Caco-2 (cell line): ENCODE measurements at regions of chr2 and their contacts with region 1.

Region 1: DNA sequence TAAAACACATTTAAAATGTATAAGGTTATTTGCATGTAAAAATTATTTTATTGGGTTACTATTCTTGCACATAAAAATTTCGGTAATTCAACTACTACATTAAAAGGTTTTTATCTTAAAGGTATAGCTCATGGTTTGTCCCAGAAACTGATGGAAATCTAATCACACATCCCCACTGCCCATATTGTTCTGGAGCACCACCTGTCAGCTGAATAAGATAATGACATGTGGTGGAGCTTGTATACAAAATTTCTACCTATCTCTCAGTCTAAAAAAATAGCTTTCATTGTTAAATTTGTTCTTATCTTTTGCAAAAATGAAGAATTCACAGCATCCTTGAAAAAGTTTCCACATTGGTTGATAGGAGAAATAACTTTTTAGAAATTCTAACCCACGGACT is 18.3 kb downstream of the ERBB4 start:
- DNase-seq: peak in 1 of 2 experiments; percentile 15
- H3K4me3 ChIP-seq: no peak overlapping the region
- H3K4me3 Mint-ChIP-seq: no peak overlapping the region
- H3K27ac Mint-ChIP-seq: no peak overlapping the region
- H3K4me1 ChIP-seq: no peaks in the 10 kb centered on the region
- H3K4me1 Mint-ChIP-seq: no peaks in the 10 kb centered on the region
- H3K27me3 ChIP-seq: no peaks in the 10 kb centered on the region
- H3K27me3 Mint-ChIP-seq: peaks cover 2% of the 10 kb centered on the region
- CTCF ChIP-seq: no peak

Region 2: GRCh38 chr2:211944572-211944971 is 575.8 kb before region 1 on chr2:
- CTCF ChIA-PET with region 1: no interaction called
- POLR2A ChIA-PET with region 1: no interaction called
- intact Hi-C with region 1: no loop called
- DNase-seq: no peak
- H3K4me3 ChIP-seq: no peak overlapping the region
- H3K4me3 Mint-ChIP-seq: no peak overlapping the region
- H3K27ac Mint-ChIP-seq: no peak overlapping the region
- H3K4me1 ChIP-seq: no peaks in the 10 kb centered on the region
- H3K4me1 Mint-ChIP-seq: no peaks in the 10 kb centered on the region
- H3K27me3 ChIP-seq: no peaks in the 10 kb centered on the region
- H3K27me3 Mint-ChIP-seq: no peaks in the 10 kb centered on the region
- CTCF ChIP-seq: no peak

Region 3: GRCh38 chr2:212402315-212402714 is 118.0 kb before region 1 on chr2:
- CTCF ChIA-PET with region 1: no interaction called
- POLR2A ChIA-PET with region 1: no interaction called
- intact Hi-C with region 1: loop called (anchors 10 kb)
- DNase-seq: no peak
- H3K4me3 ChIP-seq: no peak overlapping the region
- H3K4me3 Mint-ChIP-seq: no peak overlapping the region
- H3K27ac Mint-ChIP-seq: no peak overlapping the region
- H3K4me1 ChIP-seq: no peaks in the 10 kb centered on the region
- H3K4me1 Mint-ChIP-seq: no peaks in the 10 kb centered on the region
- H3K27me3 ChIP-seq: no peaks in the 10 kb centered on the region
- H3K27me3 Mint-ChIP-seq: no peaks in the 10 kb centered on the region
- CTCF ChIP-seq: no peak